Caco-2 (cell line): ENCODE measurements at regions of chr12 and their contacts with region 1.

Region 1: DNA sequence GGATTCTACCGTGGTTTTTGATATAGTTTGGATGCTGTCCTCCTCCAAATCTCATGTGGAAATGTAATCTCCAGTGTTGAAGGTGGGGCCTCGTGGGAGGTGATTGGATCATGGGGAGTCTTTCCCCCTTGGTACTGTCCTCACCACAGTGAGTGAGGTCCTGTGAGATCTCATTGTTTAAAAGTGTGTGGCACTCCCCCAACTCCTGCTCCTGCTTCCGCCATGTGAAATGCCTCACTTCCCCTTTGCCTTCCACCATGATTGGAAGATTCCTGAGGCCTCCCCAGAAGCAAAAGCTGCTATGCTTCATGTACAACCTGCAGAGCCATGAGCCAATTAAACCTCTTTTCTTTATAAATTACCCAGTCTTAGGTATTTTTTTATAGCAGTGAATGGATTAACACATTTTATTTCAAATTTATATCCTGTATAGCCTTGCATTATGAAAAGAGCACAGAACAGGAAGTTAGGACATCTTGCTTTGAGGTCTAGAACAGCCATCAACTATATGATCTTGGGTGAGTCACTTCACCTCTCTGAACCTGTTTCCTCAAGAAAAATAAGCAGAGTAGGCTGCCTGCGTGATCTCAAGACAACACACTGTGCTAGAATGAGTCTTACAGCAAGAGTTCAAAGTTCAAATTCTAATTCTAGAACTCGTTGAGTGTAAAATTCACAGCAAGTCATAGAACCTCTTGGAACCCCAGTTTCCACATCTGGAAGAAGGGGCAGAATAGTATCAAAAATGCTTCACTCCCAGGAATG is 160.9 kb upstream of the EEA1 start:
- DNase-seq: peak; percentile 37 to 67
- H3K4me3 ChIP-seq: no peak overlapping the region
- H3K4me3 Mint-ChIP-seq: no peak overlapping the region
- H3K27ac Mint-ChIP-seq: peak overlapping the region; percentile 98
- H3K4me1 ChIP-seq: peaks cover 67% of the 10 kb centered on the region
- H3K4me1 Mint-ChIP-seq: peaks cover 54% of the 10 kb centered on the region
- H3K27me3 ChIP-seq: no peaks in the 10 kb centered on the region
- H3K27me3 Mint-ChIP-seq: no peaks in the 10 kb centered on the region
- CTCF ChIP-seq: no peak

Region 2: DNA sequence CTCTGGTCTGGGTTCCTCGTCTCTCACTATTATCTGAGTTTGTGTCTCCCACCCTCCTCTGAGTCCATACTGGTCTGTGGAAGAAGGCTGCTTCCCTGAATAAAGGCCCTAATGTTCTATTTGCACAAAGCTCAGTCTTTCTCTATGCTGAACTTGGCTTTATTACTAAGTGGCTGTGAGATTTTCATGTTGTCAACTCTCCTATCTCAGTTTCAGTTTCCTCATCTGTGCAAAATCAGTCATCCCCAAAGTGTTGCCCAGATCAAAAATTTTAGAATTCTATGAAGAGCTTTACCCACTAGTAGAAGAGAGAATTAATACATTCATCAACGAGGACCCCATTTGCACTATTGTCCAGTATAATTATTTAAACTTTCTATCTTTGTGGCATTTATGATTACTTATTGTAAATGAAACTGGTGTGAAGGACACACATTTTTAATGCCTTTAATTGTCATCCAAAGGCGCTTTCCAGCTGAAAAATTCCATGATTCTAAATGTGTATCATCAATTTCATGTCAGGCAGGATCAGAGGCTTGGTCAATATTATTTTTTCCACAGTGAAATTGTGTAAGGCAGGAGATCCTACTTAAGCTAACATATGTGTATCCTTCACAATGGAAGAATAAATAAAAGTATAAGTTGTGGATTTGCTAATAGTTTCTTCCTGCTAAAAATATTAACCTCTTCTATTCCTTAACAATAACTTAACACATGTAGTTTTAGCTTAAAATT is 81.8 kb before region 1 on chr12:
- CTCF ChIA-PET with region 1: no interaction called
- POLR2A ChIA-PET with region 1: no interaction called
- intact Hi-C with region 1: loop called (anchors 5 kb)
- DNase-seq: no peak
- H3K4me3 ChIP-seq: peak overlapping the region; percentile 41
- H3K4me3 Mint-ChIP-seq: peak overlapping the region; percentile 90
- H3K27ac Mint-ChIP-seq: peak overlapping the region; percentile 94
- H3K4me1 ChIP-seq: peaks cover 72% of the 10 kb centered on the region
- H3K4me1 Mint-ChIP-seq: peaks cover 43% of the 10 kb centered on the region
- H3K27me3 ChIP-seq: no peaks in the 10 kb centered on the region
- H3K27me3 Mint-ChIP-seq: no peaks in the 10 kb centered on the region
- CTCF ChIP-seq: no peak

Region 3: GRCh38 chr12:93042283-93042682 is 47.7 kb before region 1 on chr12:
- CTCF ChIA-PET with region 1: no interaction called
- POLR2A ChIA-PET with region 1: no interaction called
- intact Hi-C with region 1: loop called (anchors 1 kb)
- DNase-seq: peak; percentile 72 to 84
- H3K4me3 ChIP-seq: no peak overlapping the region
- H3K4me3 Mint-ChIP-seq: peak overlapping the region; percentile 37
- H3K27ac Mint-ChIP-seq: peak overlapping the region; percentile 87
- H3K4me1 ChIP-seq: peaks cover 46% of the 10 kb centered on the region
- H3K4me1 Mint-ChIP-seq: peaks cover 51% of the 10 kb centered on the region
- H3K27me3 ChIP-seq: no peaks in the 10 kb centered on the region
- H3K27me3 Mint-ChIP-seq: no peaks in the 10 kb centered on the region
- CTCF ChIP-seq: no peak

Region 4: DNA sequence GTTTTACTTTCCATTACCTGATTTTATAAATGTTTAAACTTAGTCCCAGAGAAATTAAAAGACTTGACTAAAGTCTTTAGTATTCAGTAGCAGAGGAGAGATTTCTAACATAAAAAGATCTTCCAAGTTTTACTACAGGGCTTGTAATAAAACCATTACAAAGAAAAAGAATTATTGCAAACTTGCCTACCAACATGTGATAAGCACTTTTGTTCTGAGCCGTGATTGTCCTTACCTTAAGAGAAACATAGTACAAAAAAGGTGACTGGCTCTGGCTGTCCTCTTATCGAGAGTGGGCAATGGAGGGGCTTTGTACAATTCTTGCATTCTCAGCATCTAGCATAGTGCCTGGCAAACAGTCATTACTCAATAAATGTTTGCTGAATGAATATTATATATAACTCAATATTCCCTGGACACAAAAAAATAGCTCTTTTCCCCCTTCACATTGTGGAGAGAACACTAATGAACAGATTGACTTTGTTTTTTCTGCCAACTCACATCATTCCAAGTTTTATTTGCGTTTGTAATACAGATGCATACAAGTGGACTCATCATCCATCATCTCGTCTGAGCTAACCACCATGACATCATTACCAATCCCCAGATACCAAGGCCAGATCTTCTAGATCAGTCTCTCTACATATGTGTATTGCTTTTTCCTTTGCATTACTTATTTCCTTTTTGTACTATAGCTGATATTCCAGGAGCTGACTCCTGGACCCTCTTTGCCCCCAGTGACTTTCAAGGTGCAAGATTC is 31.9 kb after region 1 on chr12:
- CTCF ChIA-PET with region 1: no interaction called
- POLR2A ChIA-PET with region 1: interaction called, 5 read pairs
- intact Hi-C with region 1: loop called (anchors 1 kb)
- DNase-seq: no peak
- H3K4me3 ChIP-seq: peak overlapping the region; percentile 24
- H3K4me3 Mint-ChIP-seq: peak overlapping the region; percentile 74
- H3K27ac Mint-ChIP-seq: peak overlapping the region; percentile 95
- H3K4me1 ChIP-seq: peaks cover 67% of the 10 kb centered on the region
- H3K4me1 Mint-ChIP-seq: peaks cover 50% of the 10 kb centered on the region
- H3K27me3 ChIP-seq: no peaks in the 10 kb centered on the region
- H3K27me3 Mint-ChIP-seq: no peaks in the 10 kb centered on the region
- CTCF ChIP-seq: no peak

Region 5: GRCh38 chr12:93154753-93155480 is 64.9 kb after region 1 on chr12:
- CTCF ChIA-PET with region 1: no interaction called
- POLR2A ChIA-PET with region 1: no interaction called
- intact Hi-C with region 1: loop called (anchors 1 kb)
- DNase-seq: peak; percentile 64 to 68
- H3K4me3 ChIP-seq: no peak overlapping the region
- H3K4me3 Mint-ChIP-seq: peak overlapping the region; percentile 56
- H3K27ac Mint-ChIP-seq: peak overlapping the region; percentile 80
- H3K4me1 ChIP-seq: peaks cover 41% of the 10 kb centered on the region
- H3K4me1 Mint-ChIP-seq: peaks cover 38% of the 10 kb centered on the region
- H3K27me3 ChIP-seq: no peaks in the 10 kb centered on the region
- H3K27me3 Mint-ChIP-seq: no peaks in the 10 kb centered on the region
- CTCF ChIP-seq: no peak

Region 6: DNA sequence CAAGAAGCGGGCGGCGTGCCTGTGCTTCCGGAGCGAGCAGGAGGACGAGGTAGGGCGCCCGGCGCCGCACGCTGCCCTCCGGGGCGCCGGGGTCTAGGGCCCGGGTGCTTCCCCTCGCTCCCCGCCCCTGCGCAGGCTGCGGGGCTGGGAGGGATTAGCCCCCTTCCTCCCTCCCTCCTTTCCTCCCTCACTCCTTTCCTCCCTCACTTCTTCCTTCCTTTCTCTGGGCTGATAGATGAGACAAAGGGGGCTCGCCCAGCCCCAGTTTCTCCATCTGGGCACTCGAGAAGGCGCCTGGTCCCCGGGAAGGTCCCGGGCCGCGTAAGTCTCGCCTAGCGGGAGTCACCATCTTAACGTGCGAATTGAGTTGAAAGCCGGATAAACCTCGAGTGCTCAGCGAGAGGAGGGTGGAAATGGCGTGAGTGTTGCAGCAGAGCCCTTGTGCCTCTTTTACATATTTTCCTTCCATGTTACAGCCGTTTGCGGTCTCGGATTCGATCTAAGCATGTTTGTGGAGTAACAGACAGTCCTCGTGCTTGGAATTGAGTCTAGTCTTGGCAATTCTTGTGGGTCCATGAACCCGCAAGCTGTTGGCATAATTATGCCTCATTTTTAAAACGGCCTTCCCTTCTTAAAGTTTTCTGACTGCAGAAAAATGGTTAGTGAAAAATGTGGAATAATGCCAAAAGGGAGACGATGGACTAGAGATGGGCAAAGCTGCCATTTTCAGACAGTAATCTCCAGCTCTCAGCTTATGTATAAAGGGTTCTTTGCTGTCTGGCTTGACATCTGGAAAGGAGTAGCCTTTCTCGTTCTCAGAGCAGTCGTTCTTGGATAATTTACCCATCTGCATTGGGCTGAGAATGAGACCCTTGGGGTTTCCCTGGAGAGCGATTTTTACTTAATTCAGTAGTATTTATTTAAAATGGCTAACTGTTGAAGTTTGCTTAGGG is 288.7 kb after region 1 on chr12:
- CTCF ChIA-PET with region 1: no interaction called
- POLR2A ChIA-PET with region 1: no interaction called
- intact Hi-C with region 1: loop called (anchors 1 kb)
- DNase-seq: peak in 1 of 2 experiments; percentile 26
- H3K4me3 ChIP-seq: peak overlapping the region; percentile 83
- H3K4me3 Mint-ChIP-seq: peak overlapping the region; percentile 80
- H3K27ac Mint-ChIP-seq: peak overlapping the region; percentile 90
- H3K4me1 ChIP-seq: peaks cover 36% of the 10 kb centered on the region
- H3K4me1 Mint-ChIP-seq: peaks cover 25% of the 10 kb centered on the region
- H3K27me3 ChIP-seq: no peaks in the 10 kb centered on the region
- H3K27me3 Mint-ChIP-seq: no peaks in the 10 kb centered on the region
- CTCF ChIP-seq: no peak